HEK293 (cell line): ENCODE measurements at regions of chr17 and their contacts with region 1.

Region 1: DNA sequence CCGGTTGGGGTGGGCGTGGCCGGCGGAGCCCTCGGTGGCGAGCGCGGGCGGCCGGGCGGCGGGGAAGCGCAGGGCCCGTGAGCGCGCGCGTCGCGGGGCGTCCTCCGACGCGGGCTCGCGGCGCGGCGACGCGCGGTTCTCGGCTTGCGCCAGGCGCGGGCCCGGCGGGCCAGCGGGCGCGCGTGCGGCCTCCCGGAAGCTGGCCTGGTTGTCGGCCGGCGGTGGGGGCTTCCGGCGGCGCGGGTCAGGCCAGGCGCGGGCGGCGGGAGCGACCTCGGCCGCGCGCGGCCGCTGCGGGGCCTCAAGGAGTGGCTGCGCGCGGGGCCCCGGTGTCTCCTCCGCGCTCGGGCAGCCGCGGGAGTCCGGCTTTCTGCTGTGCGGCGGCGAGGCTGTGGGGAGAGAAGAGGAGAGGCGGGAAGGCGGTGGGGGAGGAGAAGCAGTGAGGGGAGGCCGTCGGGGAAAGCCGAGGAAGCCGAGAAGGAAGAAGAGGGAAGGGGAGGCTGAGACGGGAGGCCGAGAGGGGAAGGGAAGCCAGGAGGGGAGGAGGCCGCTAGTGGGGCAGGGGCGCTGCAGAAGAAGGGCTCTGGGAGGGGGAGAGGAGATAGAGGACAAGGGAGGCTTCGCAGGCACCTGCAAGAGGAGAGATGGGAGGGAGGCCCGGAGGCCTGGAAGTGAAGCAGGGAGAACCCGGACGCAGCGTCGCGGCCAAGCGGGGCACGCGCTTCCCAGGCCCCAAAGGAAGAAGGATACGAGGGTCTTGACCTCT is 2.5 kb downstream of the C17orf58 start:
- H3K4me3 ChIP-seq: peak overlapping the region; percentile 74
- H3K27ac ChIP-seq: peak overlapping the region; percentile 99
- H3K4me1 ChIP-seq: peaks cover 20% of the 10 kb centered on the region
- CTCF ChIP-seq: peak; percentile 75

Region 2: DNA sequence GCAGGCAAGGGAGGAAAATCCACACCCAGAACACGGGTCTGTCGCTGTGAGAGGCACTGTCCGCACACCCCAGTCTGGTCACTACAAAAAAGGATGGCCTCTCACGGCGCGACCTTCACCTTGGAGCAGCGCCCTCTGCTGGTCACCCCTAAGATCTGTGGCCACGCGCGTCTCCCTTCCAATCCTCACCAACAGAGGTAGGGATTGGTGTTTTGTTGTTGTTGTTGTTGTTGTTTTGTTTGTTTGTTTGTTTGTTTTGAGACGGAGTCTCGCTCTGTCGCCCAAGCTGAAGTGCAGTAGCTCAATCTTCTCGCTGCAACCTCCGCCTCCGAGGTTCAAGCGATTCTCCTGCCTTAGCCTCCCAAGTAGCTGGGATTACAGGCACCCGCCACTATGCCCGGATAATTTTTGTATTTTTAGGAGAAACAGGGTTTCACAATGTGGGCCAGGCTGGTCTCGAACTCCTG is 17.5 kb after region 1 on chr17:
- CTCF ChIA-PET with region 1: interaction called, 42 read pairs
- POLR2A ChIA-PET with region 1: interaction called, 3 read pairs
- H3K4me3 ChIP-seq: no peak overlapping the region
- H3K27ac ChIP-seq: no peak overlapping the region
- H3K4me1 ChIP-seq: no peaks in the 10 kb centered on the region
- CTCF ChIP-seq: peak; percentile 93

Region 3: GRCh38 chr17:68019675-68020408 is 26.1 kb after region 1 on chr17:
- CTCF ChIA-PET with region 1: interaction called, 7 read pairs
- POLR2A ChIA-PET with region 1: interaction called, 13 read pairs
- H3K4me3 ChIP-seq: peak overlapping the region; percentile 47
- H3K27ac ChIP-seq: peak overlapping the region; percentile 80
- H3K4me1 ChIP-seq: no peaks in the 10 kb centered on the region; the same call in 1 of the 2 replicates
- CTCF ChIP-seq: peak; percentile 91